ENCODE measurements at regions of chr2 and their contacts with region 1.

Region 1: DNA sequence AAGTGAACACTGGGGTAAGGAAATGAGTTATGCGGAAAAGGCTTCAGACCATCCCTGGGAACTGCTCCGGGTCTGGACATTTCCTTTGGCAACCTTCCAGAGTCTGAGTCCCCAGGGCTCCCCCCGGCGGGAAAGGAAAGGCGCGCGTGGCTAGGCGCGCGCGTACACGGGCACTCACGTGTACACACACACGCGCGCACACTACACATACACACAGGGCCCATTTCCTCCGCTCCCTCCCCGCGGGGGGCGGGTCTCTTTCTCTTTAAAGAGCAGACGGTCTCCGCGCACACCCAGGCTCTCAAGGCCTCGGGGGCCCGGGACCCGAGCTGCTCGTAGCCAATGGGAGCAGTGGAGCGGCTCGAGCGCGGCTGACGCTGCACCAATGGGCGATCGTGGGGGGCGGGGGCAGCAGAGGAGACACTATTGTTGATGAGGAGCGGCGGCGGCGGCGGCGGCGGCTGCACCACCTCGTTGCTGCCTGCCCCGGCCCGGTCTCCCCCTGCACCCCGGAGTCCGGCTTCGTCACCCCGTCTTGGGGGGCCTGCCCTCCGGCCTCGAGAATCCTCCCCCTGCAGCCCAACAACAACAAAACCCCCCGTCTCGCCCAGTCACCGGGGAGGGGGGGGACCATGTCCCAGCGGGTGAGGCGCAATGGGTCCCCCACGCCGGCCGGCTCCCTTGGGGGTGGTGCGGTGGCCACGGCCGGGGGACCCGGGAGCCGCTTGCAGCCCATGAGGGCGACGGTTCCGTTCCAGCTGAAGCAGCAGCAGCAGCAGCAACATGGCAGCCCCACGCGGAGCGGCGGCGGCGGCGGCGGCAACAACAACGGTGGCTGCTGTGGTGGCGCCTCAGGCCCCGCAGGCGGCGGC is at the start of gene FAM117B:
- DNase-seq: peak; percentile 97
- H3K4me3 Mint-ChIP-seq: peak within 1 kb of the TSS; percentile 94
- H3K27ac Mint-ChIP-seq: peak within 1 kb of the TSS; percentile 96
- H3K4me1 Mint-ChIP-seq: peaks cover 40% of the 10 kb centered on the region
- H3K27me3 Mint-ChIP-seq: no peaks in the 10 kb centered on the region
- total RNA-seq, gene FAM117B: 8.3 and 9.2 TPM in 2 replicates

Region 2: GRCh38 chr2:202265467-202266277 is 369.1 kb before region 1 on chr2 and contains the start of gene NOP58:
- intact Hi-C with region 1: loop called (anchors 10 kb)
- DNase-seq: peak; percentile 92
- H3K4me3 Mint-ChIP-seq: peak within 1 kb of the TSS; percentile 58
- H3K27ac Mint-ChIP-seq: peak within 1 kb of the TSS; percentile 69
- H3K4me1 Mint-ChIP-seq: peaks cover 15% of the 10 kb centered on the region
- H3K27me3 Mint-ChIP-seq: no peaks in the 10 kb centered on the region
- total RNA-seq, gene NOP58: 206 and 211 TPM in 2 replicates

Region 3: GRCh38 chr2:202588647-202589581 is 45.9 kb before region 1 on chr2:
- intact Hi-C with region 1: loop called (anchors 5 kb)
- DNase-seq: peak; percentile 53
- H3K4me3 Mint-ChIP-seq: no peak overlapping the region
- H3K27ac Mint-ChIP-seq: no peak overlapping the region
- H3K4me1 Mint-ChIP-seq: peaks cover 4% of the 10 kb centered on the region
- H3K27me3 Mint-ChIP-seq: no peaks in the 10 kb centered on the region

Region 4: DNA sequence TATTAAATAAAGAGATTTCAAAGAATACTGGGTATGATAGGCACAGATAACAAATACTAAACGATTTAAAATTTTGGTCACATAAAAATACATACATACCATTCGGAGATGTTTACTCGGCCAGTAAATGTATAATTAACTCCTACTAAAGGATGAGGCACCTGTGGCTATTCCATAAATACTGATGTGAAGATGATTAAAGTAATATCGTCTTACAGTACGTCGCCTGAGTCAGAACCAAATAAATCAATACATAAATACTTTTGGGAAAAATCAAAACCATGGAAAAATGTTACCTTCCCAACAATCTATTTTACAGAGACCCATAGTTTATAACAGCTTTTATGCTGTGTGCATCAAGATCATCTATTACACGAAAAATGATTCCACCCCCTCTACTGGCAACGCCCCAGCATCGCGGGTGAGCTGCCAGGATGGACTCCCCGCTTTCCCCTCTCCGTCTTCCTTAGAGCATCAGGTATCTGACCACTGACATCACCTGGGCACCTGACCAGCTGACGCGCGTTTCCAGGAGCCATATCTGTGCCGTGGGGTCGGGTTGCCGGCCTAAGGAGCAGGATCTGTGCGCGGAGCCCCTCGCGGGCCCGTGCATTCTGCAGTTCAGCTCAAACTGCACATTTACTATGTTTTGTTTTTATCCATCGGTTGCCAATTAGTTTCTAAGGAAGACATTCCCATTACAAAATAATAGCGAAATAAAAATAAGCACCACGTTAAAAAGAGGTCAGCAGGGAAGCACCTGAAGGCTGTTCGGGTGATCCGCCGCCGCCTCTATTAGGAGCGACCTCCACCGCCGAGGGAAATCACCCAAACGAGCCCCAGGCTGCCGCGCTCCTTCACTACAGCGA is 235.9 kb after region 1 on chr2:
- intact Hi-C with region 1: loop called (anchors 1 kb)
- DNase-seq: peak; percentile 58
- H3K4me3 Mint-ChIP-seq: peak overlapping the region; percentile 84
- H3K27ac Mint-ChIP-seq: peak overlapping the region; percentile 74
- H3K4me1 Mint-ChIP-seq: peaks cover 11% of the 10 kb centered on the region
- H3K27me3 Mint-ChIP-seq: no peaks in the 10 kb centered on the region

Region 5: DNA sequence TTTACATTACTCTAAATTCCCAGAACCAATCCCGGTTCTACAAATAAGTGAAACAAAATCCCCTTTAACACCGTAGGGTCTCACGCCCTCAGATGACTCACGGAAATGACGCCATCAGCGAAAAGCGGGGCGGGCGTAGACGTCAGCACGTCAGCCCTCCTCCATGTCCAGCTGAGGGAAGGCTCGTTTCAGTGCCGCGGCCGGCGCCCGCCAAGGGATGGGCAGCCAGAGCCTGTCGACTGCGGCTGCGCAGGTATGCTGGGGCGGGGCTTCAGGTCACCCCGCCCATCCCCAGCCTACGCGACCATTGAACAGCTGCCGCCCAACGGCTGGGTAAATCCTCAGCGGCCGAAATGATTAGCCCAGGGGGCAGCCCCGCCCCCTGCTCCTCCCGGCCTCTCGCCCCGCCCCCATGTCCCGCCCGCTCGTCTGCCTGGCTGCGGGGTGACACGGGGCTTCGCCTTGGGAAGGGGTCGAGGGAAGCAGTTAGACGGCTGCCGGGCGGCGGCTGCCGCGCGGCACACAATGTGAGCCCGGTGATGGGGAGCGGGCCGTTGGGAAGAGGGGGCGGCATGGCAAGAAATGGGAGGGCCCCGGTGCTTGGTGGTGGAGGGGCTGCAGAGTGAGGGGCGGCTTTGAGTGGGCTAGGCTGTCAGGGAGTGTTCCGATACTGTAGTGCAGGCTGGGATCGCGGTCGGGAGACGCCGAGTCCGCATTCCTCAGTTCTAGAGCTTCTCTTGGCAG is 379.8 kb after region 1 on chr2 and contains the start of gene NBEAL1:
- intact Hi-C with region 1: loop called (anchors 5 kb)
- DNase-seq: peak; percentile 96
- H3K4me3 Mint-ChIP-seq: peak within 1 kb of the TSS; percentile 98
- H3K27ac Mint-ChIP-seq: peak within 1 kb of the TSS; percentile 92
- H3K4me1 Mint-ChIP-seq: peaks cover 28% of the 10 kb centered on the region
- H3K27me3 Mint-ChIP-seq: peaks cover 16% of the 10 kb centered on the region
- total RNA-seq, gene NBEAL1: 10.6 and 12.2 TPM in 2 replicates